Posterior cingulate gyrus (tissue), 11 donors: ENCODE measurements at regions of chr4 and their contacts with region 1.

Region 1: DNA sequence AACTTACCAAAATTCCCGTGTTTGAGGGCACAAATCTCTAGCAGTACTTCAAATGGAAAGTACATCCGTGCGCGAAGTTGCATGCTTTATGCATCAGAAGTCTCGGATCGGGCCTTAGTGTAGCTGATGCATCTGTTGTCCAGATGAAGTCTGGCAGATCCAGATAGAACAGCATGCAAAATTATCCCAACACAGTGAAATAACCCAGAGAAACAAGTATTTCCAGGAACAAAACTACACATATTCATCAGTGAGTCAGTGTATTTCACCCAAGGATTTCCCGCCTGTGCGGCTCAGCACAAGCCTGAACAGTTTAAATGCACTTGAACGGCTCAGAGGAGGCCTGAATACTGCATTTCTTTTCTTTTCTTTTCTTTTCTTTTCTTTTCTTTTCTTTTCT is 27.4 kb upstream of the CLDN24 start:
- DNase-seq: no peak

Region 2: DNA sequence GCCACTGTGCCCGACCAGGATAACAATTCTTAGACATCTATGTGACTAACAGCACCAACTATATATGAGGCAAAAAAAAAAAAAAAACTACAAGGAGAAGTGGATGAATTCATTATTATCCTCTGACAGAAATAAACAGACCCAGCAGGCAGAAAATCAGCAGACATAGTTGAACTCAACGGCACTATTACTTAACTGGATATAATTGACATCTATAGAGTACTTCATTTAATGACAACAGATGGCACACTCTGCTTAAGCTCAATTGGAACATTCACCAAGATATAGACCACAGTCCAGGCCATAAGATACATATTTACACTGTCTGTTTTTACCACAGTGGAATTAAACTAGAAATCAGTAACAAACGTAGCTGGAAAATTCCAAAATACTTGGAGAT is 42.9 kb before region 1 on chr4:
- intact Hi-C with region 1: loop called (anchors 2 kb)
- DNase-seq: no peak